ENCODE measurements at regions of chr15 and their contacts with region 1.

Region 1: DNA sequence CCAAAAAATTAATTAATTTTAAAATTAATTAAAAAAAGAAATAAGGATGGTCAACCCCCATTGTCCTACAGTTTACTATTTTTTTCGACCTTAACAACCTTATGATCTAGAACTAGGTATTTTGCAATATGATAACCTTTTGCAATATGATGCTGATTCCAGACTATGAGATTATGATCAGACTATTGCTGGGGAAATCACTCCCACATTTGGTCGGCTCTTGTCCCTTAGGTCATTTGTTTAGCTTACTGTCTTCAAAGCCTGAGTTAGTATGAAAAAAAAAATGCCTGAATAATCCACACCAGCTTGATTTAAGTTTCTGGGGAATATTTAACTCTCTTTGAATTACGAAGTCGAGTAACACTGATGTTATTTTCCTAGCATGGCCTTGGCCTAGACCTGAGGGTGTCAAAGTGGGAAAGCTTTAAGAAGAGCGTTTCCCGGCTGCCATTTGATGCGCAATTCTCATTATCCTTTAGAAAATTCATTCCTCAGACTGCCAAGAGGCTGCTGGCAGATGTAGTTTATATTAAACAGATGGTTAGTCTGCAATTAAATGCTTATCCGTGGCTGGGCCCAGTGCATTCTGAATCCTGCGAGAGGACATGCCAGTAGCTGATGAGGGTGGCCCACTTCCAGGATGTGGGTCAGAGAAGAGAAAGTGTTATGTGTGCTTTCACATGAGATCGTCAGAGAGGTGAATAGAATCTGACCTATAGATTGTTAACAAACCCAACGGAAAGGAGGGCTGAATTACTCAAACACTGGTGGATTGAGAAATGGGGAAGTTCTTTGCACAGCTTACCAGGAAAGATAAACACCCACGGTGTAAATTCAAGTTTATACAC is 496.0 kb upstream of the THBS1 start:
- DNase-seq: no peak
- H3K4me3 ChIP-seq: no peak overlapping the region
- H3K27ac ChIP-seq: peak overlapping the region in 1 of 2 donors; percentile 6
- H3K4me1 ChIP-seq: no peaks in the 10 kb centered on the region
- H3K27me3 ChIP-seq: no peaks in the 10 kb centered on the region
- CTCF ChIP-seq: no peak
- POLR2A ChIP-seq: no peak

Region 2: GRCh38 chr15:39154227-39154638 is 69.3 kb after region 1 on chr15:
- intact Hi-C with region 1: loop called (anchors 10 kb)
- DNase-seq: no peak
- H3K4me3 ChIP-seq: no peak overlapping the region
- H3K27ac ChIP-seq: peak overlapping the region in 1 of 2 donors; percentile 36
- H3K4me1 ChIP-seq: no peaks in the 10 kb centered on the region
- H3K27me3 ChIP-seq: no peaks in the 10 kb centered on the region
- CTCF ChIP-seq: peak in 2 of 4 experiments; percentile 35 to 45
- POLR2A ChIP-seq: no peak